SK-N-SH (cell line): ENCODE measurements at regions of chr11 and their contacts with region 1.

Region 1: DNA sequence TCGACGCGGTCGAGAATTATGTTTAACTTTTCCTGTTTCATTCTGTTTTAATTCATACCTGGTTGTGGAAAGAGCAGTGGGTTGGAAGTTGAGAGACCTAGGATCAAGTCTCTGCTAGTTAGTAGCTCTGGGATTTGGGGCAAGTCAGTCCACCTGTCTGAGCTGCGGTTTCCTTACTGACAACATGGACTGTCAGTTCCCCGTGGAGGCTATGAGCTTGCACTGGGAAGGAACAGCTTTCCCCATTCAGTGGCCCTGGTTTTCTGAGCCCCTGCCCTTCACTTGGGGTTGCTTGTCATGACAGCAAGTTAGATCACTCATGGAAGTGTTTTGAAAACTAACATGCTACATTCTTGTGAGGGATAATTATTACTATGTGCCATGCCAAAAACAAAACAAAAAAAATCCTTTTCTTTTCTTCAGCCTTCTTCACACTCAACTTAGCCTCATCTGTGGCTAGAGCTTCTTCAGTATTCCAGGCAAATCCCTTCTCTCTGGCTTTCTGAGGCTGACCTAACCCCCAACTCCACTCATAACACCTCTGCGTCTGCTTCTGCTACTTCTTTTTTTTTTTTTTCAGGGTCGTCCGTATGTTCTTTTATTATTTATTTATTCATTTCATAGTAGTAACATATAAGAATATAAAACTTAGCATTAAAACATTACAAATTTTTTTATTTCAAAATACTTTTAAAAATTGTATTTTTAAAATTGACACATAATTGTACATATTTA is 43.0 kb upstream of the ZBED5 start:
- DNase-seq: no peak
- H3K4me3 ChIP-seq: no peak overlapping the region
- H3K27ac ChIP-seq: peak overlapping the region; percentile 86 to 99
- H3K4me1 ChIP-seq: peaks cover 21 to 29% of the 10 kb centered on the region in 2 experiments; a peak in 3 of 4 replicates
- H3K27me3 ChIP-seq: no peaks in the 10 kb centered on the region
- CTCF ChIP-seq: no peak
- EP300 ChIP-seq: no peak
- RAD21 ChIP-seq: no peak

Region 2: GRCh38 chr11:10878408-10879214 is 22.2 kb before region 1 on chr11:
- CTCF ChIA-PET with region 1: interaction called, 10 read pairs
- POLR2A ChIA-PET with region 1: no interaction called
- DNase-seq: peak; percentile 47
- H3K4me3 ChIP-seq: no peak overlapping the region
- H3K27ac ChIP-seq: no peak overlapping the region; a peak in 1 of 4 replicates
- H3K4me1 ChIP-seq: no peaks in the 10 kb centered on the region
- H3K27me3 ChIP-seq: no peaks in the 10 kb centered on the region
- CTCF ChIP-seq: peak; percentile 72
- EP300 ChIP-seq: no peak
- RAD21 ChIP-seq: peak; percentile 47

Region 3: GRCh38 chr11:10920205-10920604 is 19.4 kb after region 1 on chr11:
- CTCF ChIA-PET with region 1: no interaction called
- POLR2A ChIA-PET with region 1: no interaction called
- DNase-seq: no peak
- H3K4me3 ChIP-seq: no peak overlapping the region
- H3K27ac ChIP-seq: no peak overlapping the region
- H3K4me1 ChIP-seq: no peaks in the 10 kb centered on the region
- H3K27me3 ChIP-seq: no peaks in the 10 kb centered on the region
- CTCF ChIP-seq: no peak
- EP300 ChIP-seq: no peak
- RAD21 ChIP-seq: no peak